IMR-90 (cell line): ENCODE measurements at regions of chr16 and their contacts with region 1.

Region 1: DNA sequence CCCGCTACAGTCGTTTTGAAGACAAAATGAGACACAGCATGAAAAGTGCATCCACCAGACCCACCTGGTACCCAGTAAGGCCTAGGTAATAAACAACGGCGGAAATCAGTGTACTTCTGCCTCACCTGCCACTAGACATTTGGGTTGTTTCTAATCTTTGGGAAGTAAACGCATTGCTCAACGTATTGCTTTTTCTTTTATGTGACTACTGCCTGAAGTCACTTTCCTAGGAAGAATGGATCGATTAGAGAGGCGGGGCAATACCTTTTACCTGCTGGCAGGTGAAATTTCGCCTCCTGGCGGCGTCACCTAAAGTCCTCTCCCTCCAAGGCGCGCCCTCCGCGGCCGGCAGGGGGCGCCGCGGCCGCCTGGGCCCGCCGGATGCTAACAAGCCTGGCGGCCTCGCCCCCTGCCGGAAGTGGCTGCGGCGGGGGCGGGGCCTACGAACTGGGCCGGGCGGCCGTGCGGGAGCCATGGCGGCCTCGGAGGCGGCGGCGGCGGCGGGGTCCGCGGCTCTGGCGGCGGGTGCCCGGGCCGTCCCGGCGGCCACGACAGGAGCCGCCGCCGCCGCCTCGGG is at the start of gene ATMIN:
- DNase-seq: peak; percentile 77
- ATAC-seq: peak; percentile 96
- H3K4me3 ChIP-seq: peak within 1 kb of the TSS; percentile 89
- H3K27ac ChIP-seq: peak within 1 kb of the TSS; percentile 67
- H3K4me1 ChIP-seq: peaks cover 2% of the 10 kb centered on the region; the same call in 1 of the 2 replicates
- H3K27me3 ChIP-seq: no peaks in the 10 kb centered on the region
- CTCF ChIP-seq: peak; percentile 100; the same call in 1 of the 2 replicates
- POLR2A ChIP-seq: peak; percentile 36; the same call in 1 of the 2 replicates
- RAD21 ChIP-seq: peak; percentile 69
- total RNA-seq, gene ATMIN: 38.9 and 45.9 TPM in 2 replicates

Region 2: DNA sequence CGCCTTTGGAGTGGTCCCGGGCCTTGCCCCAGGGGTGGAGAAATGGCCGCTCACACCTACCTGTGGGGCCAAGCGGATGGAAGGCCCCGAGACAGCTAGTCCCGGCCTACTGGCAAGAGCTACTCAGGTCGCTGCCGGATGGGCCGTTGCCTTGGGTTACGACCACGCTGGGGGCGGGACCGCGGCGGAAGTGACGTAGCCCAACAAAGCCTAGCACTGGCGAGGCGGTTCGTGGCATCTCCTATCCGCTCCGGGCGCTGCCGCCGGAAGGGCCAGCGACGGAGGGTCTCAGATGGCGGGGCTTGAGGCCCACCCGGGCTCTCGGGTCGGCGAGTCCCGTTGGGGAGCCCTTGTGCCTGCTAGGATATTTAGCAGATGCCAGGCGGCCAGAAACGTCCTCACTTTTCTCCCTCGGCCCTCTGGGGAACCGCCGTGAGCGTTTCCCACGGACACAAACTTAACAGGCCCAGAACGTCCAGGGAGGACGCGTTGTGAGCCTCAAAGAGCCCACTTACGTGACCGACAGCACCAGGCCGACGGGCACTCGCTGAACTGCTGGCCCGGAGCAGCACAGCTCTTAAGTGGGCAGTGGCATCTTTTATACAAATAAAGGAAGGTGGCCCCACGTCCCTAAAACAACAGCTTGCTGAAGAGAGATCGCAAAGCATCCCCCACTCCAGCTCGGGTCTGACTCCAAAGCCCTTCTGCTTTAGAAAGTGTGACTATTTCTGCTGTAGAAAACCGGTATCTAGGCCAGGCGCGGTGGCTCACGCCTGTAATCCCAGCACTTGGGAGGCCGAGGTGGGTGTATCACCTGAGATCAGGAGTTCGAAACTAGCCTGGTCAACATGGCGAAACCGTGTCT is 41.8 kb after region 1 on chr16 and contains the start of gene C16orf46:
- CTCF ChIA-PET with region 1: no interaction called
- POLR2A ChIA-PET with region 1: no interaction called
- dilution Hi-C with region 1: no loop called
- in situ Hi-C with region 1: no loop called
- intact Hi-C with region 1: loop called (anchors 5 kb)
- DNase-seq: peak; percentile 95
- ATAC-seq: peak; percentile 94
- H3K4me3 ChIP-seq: peak within 1 kb of the TSS; percentile 80
- H3K27ac ChIP-seq: peak within 1 kb of the TSS; percentile 85
- H3K4me1 ChIP-seq: peaks cover 3% of the 10 kb centered on the region; the same call in 1 of the 2 replicates
- H3K27me3 ChIP-seq: no peaks in the 10 kb centered on the region
- CTCF ChIP-seq: no peak
- POLR2A ChIP-seq: peak; percentile 96
- RAD21 ChIP-seq: no peak
- total RNA-seq, gene C16orf46: under 0.01 and 0.72 TPM in 2 replicates

Region 3: DNA sequence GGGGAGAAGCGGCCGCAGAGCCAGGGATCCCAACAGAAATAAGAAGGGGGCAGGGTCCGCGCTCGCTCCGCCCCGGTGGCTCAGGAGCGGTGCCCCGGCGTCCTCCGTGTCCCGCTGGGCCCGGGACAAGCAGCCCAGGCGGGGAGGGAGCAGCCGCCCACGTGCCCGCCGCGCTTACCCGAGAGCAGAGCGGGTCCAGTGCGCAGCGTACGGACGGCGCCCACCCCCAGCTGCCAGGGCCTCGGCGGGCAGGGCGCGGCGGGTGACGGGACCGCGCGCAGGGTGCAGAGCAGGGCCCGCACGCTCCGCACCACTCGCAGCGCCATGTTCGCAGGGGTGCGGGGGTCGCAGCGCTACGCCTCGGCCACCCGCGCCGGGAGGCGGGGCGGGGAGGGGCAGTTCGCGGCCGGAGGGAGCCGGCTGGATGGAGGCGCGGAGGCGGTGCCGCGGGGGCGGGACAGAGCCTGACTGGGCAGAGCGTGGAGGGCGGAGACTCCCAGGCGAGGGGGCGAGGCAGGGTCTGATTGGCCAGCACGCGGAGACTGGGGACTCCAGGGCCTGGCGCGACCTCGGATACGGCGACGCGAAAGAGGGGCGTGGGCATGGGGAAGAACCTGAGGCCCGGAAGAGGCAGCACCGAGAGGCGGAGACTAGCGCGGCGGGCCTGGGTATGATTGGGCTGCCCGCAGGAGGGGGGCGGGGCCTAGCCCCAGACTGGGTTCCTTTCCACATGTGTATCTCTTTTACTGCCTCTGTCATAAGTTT is 60.6 kb after region 1 on chr16 and contains the start of gene GCSH:
- CTCF ChIA-PET with region 1: interaction called, 4 read pairs
- POLR2A ChIA-PET with region 1: no interaction called
- dilution Hi-C with region 1: no loop called
- in situ Hi-C with region 1: no loop called
- intact Hi-C with region 1: loop called (anchors 5 kb)
- DNase-seq: peak; percentile 98
- ATAC-seq: peak; percentile 99
- H3K4me3 ChIP-seq: peak within 1 kb of the TSS; percentile 73
- H3K27ac ChIP-seq: peak within 1 kb of the TSS; percentile 42; the same call in 1 of the 2 replicates
- H3K4me1 ChIP-seq: 0 out of 2 replicates have a peak, but pooled peaks cover 2% of the 10 kb centered on the region
- H3K27me3 ChIP-seq: no peaks in the 10 kb centered on the region
- CTCF ChIP-seq: no peak
- POLR2A ChIP-seq: no peak
- RAD21 ChIP-seq: no peak
- total RNA-seq, gene GCSH: 9.3 and 19.7 TPM in 2 replicates

Region 4: GRCh38 chr16:81204798-81205680 is 169.6 kb after region 1 on chr16:
- CTCF ChIA-PET with region 1: no interaction called
- POLR2A ChIA-PET with region 1: no interaction called
- dilution Hi-C with region 1: no loop called
- in situ Hi-C with region 1: no loop called
- intact Hi-C with region 1: loop called (anchors 5 kb)
- DNase-seq: peak; percentile 64
- ATAC-seq: peak; percentile 90
- H3K4me3 ChIP-seq: no peak overlapping the region
- H3K27ac ChIP-seq: no peak overlapping the region
- H3K4me1 ChIP-seq: peaks cover 3% of the 10 kb centered on the region; the same call in 1 of the 2 replicates
- H3K27me3 ChIP-seq: peaks cover 24% of the 10 kb centered on the region
- CTCF ChIP-seq: peak; percentile 71
- POLR2A ChIP-seq: no peak
- RAD21 ChIP-seq: peak; percentile 64

Region 5: GRCh38 chr16:81314603-81315270 is 279.3 kb after region 1 on chr16 and contains the start of gene GAN:
- CTCF ChIA-PET with region 1: interaction called, 3 read pairs
- POLR2A ChIA-PET with region 1: no interaction called
- dilution Hi-C with region 1: no loop called
- in situ Hi-C with region 1: no loop called
- intact Hi-C with region 1: loop called (anchors 2 kb)
- DNase-seq: peak; percentile 95
- ATAC-seq: peak; percentile 91
- H3K4me3 ChIP-seq: peak within 1 kb of the TSS; percentile 92
- H3K27ac ChIP-seq: peak within 1 kb of the TSS; percentile 71
- H3K4me1 ChIP-seq: peaks cover 12% of the 10 kb centered on the region
- H3K27me3 ChIP-seq: no peaks in the 10 kb centered on the region
- CTCF ChIP-seq: no peak
- POLR2A ChIP-seq: peak; percentile 75
- RAD21 ChIP-seq: no peak
- total RNA-seq, gene GAN: 5.7 and 9.2 TPM in 2 replicates

Region 6: GRCh38 chr16:81737885-81738786 is 702.6 kb after region 1 on chr16:
- CTCF ChIA-PET with region 1: interaction called, 3 read pairs
- POLR2A ChIA-PET with region 1: no interaction called
- dilution Hi-C with region 1: no loop called
- in situ Hi-C with region 1: loop called (anchors 25 kb)
- intact Hi-C with region 1: loop called (anchors 1 kb)
- DNase-seq: peak; percentile 60
- ATAC-seq: peak; percentile 95
- H3K4me3 ChIP-seq: no peak overlapping the region
- H3K27ac ChIP-seq: no peak overlapping the region
- H3K4me1 ChIP-seq: no peaks in the 10 kb centered on the region
- H3K27me3 ChIP-seq: peaks cover 5% of the 10 kb centered on the region; the same call in 1 of the 2 replicates
- CTCF ChIP-seq: peak; percentile 87
- POLR2A ChIP-seq: no peak
- RAD21 ChIP-seq: peak; percentile 90